ENCODE measurements at regions of chr6 and their contacts with region 1.

Region 1: DNA sequence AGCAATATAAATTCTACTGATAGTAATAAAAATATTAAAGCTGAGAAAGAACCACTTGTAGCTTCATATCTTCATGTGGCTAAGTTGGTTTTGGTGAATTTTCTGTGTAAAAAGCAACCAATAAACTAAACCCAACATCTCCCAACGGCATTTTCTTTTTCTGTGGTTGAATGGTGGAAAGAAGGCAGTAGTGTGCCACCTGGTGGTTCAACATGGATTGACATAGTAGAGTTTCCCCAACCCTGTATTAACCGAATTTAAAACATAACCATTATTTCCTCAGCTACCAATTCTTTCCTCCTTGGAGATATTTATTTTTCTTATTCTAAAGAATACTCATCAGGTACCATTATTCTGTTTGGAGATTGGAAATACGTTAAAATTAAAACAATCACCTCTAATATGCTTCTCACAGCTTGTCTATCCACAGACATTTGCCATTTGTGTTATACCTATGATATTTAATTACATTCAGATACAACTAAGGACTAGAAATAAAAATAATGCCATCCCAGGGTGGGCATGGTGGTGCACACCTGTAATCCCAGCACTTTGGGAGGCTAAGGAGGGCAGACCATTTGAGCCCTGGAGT is 117.1 kb upstream of the EEF1E1 start:
- DNase-seq: peak; percentile 65
- ATAC-seq: no peak
- H3K4me3 Mint-ChIP-seq: no peak overlapping the region
- H3K27ac Mint-ChIP-seq: no peak overlapping the region
- H3K4me1 Mint-ChIP-seq: no peaks in the 10 kb centered on the region
- H3K27me3 Mint-ChIP-seq: peaks cover 2% of the 10 kb centered on the region
- CTCF ChIP-seq: peak; percentile 79

Region 2: GRCh38 chr6:8113131-8113654 is 106.3 kb before region 1 on chr6:
- CTCF ChIA-PET with region 1: interaction called, 10 read pairs
- POLR2A ChIA-PET with region 1: no interaction called
- intact Hi-C with region 1: no loop called
- DNase-seq: no peak
- ATAC-seq: no peak
- H3K4me3 Mint-ChIP-seq: no peak overlapping the region
- H3K27ac Mint-ChIP-seq: no peak overlapping the region
- H3K4me1 Mint-ChIP-seq: no peaks in the 10 kb centered on the region
- H3K27me3 Mint-ChIP-seq: peaks cover 11% of the 10 kb centered on the region
- CTCF ChIP-seq: no peak

Region 3: GRCh38 chr6:8195040-8195713 is 24.3 kb before region 1 on chr6:
- CTCF ChIA-PET with region 1: interaction called, 10 read pairs
- POLR2A ChIA-PET with region 1: interaction called, 3 read pairs
- intact Hi-C with region 1: no loop called
- DNase-seq: no peak
- ATAC-seq: no peak
- H3K4me3 Mint-ChIP-seq: no peak overlapping the region
- H3K27ac Mint-ChIP-seq: no peak overlapping the region
- H3K4me1 Mint-ChIP-seq: no peaks in the 10 kb centered on the region
- H3K27me3 Mint-ChIP-seq: peaks cover 7% of the 10 kb centered on the region
- CTCF ChIP-seq: peak; percentile 36

Region 4: GRCh38 chr6:8207200-8208191 is 12.0 kb before region 1 on chr6:
- CTCF ChIA-PET with region 1: interaction called, 20 read pairs
- POLR2A ChIA-PET with region 1: no interaction called
- intact Hi-C with region 1: no loop called
- DNase-seq: no peak
- ATAC-seq: no peak
- H3K4me3 Mint-ChIP-seq: no peak overlapping the region
- H3K27ac Mint-ChIP-seq: no peak overlapping the region
- H3K4me1 Mint-ChIP-seq: no peaks in the 10 kb centered on the region
- H3K27me3 Mint-ChIP-seq: peaks cover 9% of the 10 kb centered on the region
- CTCF ChIP-seq: no peak

Region 5: GRCh38 chr6:8243475-8243874 is 24.0 kb after region 1 on chr6:
- CTCF ChIA-PET with region 1: interaction called, 16 read pairs
- POLR2A ChIA-PET with region 1: no interaction called
- intact Hi-C with region 1: no loop called
- DNase-seq: no peak
- ATAC-seq: no peak
- H3K4me3 Mint-ChIP-seq: no peak overlapping the region
- H3K27ac Mint-ChIP-seq: no peak overlapping the region
- H3K4me1 Mint-ChIP-seq: no peaks in the 10 kb centered on the region
- H3K27me3 Mint-ChIP-seq: peaks cover 5% of the 10 kb centered on the region
- CTCF ChIP-seq: no peak